ENCODE measurements at regions of chr22 and their contacts with region 1.

Region 1: GRCh38 chr22:20116951-20117645 is at the start of gene TRMT2A:
- DNase-seq: peak; percentile 98
- H3K4me3 ChIP-seq: peak within 1 kb of the TSS; percentile 84 to 96 (median 95)
- H3K27ac ChIP-seq: peak within 1 kb of the TSS; percentile 66
- H3K4me1 ChIP-seq: peaks cover 23% of the 10 kb centered on the region
- H3K27me3 ChIP-seq: no peaks in the 10 kb centered on the region
- CTCF ChIP-seq: peak in 1 of 2 donors; percentile 31
- total RNA-seq, gene TRMT2A: 30.3 to 42.6 TPM

Region 2: DNA sequence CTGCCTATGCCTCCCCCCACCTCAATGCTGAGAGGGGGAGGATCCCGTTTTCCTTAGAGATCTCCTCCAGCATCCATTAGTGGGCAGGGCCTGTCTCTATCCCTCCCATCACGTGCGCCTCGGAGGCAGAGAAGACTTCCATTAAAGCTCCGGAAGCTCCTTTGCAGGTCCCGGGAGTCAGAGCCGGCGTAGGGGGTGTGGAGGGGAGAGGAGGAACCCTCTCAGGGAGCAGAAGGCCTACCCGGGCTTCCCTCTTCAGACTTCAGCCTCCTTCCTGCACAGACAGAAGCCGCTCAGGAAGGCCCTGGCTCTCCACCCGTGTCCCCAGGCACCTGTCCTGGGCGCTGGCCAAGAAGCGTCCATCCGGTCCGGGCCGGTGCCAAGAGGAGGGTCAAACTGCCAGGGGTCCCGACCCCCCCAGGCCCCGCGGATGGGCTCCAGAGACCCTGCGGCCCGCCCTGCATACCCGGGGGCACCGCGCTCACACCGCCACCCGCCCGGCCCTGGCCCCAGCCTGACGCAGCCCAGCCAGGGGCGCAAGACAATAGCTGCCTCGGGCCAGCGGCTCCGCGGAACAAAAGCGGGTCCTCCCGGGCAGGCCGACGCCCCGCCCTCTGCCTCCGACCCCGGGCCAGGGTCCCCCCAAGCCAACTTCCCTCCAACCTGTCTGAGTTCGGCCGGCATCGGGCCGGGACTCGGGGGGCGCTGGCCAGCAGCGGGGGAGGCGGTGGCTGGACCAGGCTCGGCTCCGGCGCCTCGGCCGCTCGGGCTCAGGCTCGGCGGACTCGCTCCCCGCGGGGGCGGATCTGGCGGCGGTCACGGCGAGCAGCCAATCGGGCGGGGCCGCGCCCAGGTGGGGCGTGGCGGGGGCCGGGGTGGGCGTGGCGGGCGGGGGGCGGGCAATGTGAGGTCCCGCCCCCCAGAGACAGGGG is 130.4 kb before region 1 on chr22:
- CTCF ChIA-PET with region 1: no interaction called
- dilution Hi-C with region 1: loop called (anchors 5 kb)
- in situ Hi-C with region 1: no loop called
- intact Hi-C with region 1: loop called (anchors 5 kb)
- DNase-seq: peak; percentile 72
- H3K4me3 ChIP-seq: peak overlapping the region; percentile 66 to 79 (median 73)
- H3K27ac ChIP-seq: no peak overlapping the region
- H3K4me1 ChIP-seq: peaks cover 45% of the 10 kb centered on the region
- H3K27me3 ChIP-seq: no peaks in the 10 kb centered on the region
- CTCF ChIP-seq: no peak

Region 3: DNA sequence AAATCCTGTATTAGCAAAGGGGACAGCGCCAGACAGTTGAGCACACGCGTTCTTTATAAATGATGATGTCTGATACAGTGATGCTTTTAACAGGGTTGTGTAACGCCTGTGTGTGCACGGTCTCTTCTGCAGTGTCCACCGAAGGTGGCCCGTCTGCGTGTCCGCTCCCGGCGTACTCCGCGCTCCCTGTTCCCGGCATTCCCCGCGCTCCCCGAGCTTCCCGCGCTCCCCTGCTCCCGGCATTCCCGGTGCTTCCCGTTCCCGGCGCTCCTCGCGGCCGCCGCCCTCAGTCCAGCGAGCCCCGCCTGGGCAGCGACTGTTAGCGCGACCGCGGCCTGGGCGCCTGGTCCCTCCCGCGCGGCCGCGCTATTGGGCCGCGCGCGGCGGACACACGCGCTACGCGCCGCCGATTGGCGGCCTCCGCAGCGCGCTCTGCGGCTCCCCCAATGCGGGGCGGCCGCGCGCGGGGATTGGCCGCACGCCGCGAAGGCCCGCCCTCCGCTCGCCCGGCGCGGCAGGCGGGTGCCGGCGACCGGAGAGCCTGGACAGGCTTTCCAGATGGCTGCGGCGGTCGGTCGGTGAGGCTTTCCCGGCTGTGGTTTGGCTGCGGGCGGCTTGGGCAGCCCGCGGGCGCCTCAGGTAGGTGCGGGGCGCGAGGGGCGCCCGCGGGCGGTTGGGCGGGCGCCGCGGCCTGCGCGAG is 37.2 kb before region 1 on chr22 and contains the start of gene DGCR8:
- CTCF ChIA-PET with region 1: no interaction called
- dilution Hi-C with region 1: loop called (anchors 5 kb)
- in situ Hi-C with region 1: no loop called
- intact Hi-C with region 1: loop called (anchors 1 kb)
- DNase-seq: peak; percentile 96
- H3K4me3 ChIP-seq: peak within 1 kb of the TSS; percentile 67 to 73 (median 73)
- H3K27ac ChIP-seq: peak within 1 kb of the TSS; percentile 81
- H3K4me1 ChIP-seq: peaks cover 18% of the 10 kb centered on the region
- H3K27me3 ChIP-seq: no peaks in the 10 kb centered on the region
- CTCF ChIP-seq: no peak
- total RNA-seq, gene DGCR8: 23.0 to 40.4 TPM

Region 4: DNA sequence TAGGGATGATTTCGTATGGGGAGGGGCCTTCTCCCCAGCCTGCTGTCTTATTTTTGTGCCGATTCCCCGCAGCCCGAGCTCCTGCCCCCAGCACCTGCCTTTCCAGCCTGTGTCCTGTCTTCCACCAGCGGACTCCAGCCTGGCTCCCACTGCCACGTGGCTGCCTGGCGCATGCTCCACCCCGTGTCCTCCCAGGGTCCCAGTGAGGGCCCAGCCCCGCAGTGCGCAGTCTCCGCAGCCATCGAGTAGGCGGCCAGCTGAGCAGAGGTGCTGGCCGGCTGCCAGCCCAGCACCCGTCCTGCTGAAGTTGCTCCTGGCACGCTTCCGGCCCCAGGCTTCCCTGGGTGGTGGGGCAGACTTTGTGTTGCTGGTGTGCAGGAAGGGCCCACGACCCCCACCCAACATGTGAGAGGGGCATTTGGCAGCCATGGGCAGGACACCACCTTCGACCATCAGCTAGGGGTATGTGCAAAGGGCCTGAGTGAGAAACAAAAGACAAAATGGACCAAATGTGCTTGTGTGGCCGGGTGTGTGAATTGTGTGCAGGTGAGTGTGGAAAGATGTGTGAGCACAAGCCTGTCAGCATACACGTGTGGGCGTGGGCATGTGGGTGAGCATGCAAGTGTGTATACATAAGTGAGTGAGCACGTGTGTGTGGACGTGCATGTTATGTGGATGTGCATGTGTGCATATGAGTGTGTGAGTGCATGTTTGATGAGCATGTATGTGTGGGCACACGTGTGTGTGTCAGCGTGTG is 95.1 kb after region 1 on chr22:
- CTCF ChIA-PET with region 1: no interaction called
- dilution Hi-C with region 1: loop called (anchors 5 kb)
- in situ Hi-C with region 1: no loop called
- intact Hi-C with region 1: no loop called
- DNase-seq: peak; percentile 13
- H3K4me3 ChIP-seq: no peak overlapping the region
- H3K27ac ChIP-seq: no peak overlapping the region
- H3K4me1 ChIP-seq: peaks cover 20% of the 10 kb centered on the region
- H3K27me3 ChIP-seq: no peaks in the 10 kb centered on the region
- CTCF ChIP-seq: no peak

Measured in mammary epithelial cell (primary cell).